Caco-2 (cell line): ENCODE measurements at regions of chr1 and their contacts with region 1.

Region 1: DNA sequence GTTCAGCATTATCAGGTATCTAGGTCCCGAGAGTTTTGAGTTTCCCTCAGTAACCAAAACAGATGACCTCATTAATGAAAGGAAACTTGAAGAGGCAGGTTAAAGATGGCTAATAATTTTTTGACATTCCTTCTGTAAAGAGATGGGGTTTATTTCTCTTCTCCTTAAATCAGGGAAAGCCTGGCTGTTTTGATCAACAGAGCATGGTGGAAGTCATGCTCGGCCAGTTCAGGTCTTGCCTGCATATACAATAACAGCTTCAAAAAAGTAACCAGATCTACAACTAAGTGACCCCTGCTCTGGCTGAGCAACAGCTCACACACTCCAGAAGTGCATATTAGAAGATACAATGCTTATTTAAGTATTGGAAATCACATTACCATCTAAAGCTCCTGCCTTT is 36.6 kb upstream of the POU2F1 start:
- DNase-seq: no peak
- H3K4me3 ChIP-seq: no peak overlapping the region
- H3K4me3 Mint-ChIP-seq: no peak overlapping the region
- H3K27ac Mint-ChIP-seq: no peak overlapping the region
- H3K4me1 ChIP-seq: no peaks in the 10 kb centered on the region
- H3K4me1 Mint-ChIP-seq: no peaks in the 10 kb centered on the region
- H3K27me3 ChIP-seq: no peaks in the 10 kb centered on the region
- H3K27me3 Mint-ChIP-seq: peaks cover 2% of the 10 kb centered on the region
- CTCF ChIP-seq: no peak

Region 2: GRCh38 chr1:167297222-167298214 is 113.4 kb after region 1 on chr1:
- CTCF ChIA-PET with region 1: no interaction called
- POLR2A ChIA-PET with region 1: no interaction called
- intact Hi-C with region 1: loop called (anchors 1 kb)
- DNase-seq: peak in 1 of 2 experiments; percentile 47
- H3K4me3 ChIP-seq: no peak overlapping the region
- H3K4me3 Mint-ChIP-seq: no peak overlapping the region
- H3K27ac Mint-ChIP-seq: no peak overlapping the region
- H3K4me1 ChIP-seq: peaks cover 15% of the 10 kb centered on the region
- H3K4me1 Mint-ChIP-seq: peaks cover 7% of the 10 kb centered on the region
- H3K27me3 ChIP-seq: no peaks in the 10 kb centered on the region
- H3K27me3 Mint-ChIP-seq: no peaks in the 10 kb centered on the region
- CTCF ChIP-seq: no peak